ENCODE measurements at regions of chr15 and their contacts with region 1.

Region 1: GRCh38 chr15:37891766-37892368 is 42.6 kb upstream of the TMCO5A start:
- DNase-seq: peak; percentile 42 to 68 (median 65)
- H3K4me3 ChIP-seq: peak overlapping the region in 1 of 7 experiments; percentile 17
- H3K27ac ChIP-seq: no peak overlapping the region
- H3K4me1 ChIP-seq: peaks cover 0 to 4% (median 1%) of the 10 kb centered on the region in 4 experiments
- H3K27me3 ChIP-seq: peaks cover 0 to 11% (median 2%) of the 10 kb centered on the region in 5 experiments

Region 2: DNA sequence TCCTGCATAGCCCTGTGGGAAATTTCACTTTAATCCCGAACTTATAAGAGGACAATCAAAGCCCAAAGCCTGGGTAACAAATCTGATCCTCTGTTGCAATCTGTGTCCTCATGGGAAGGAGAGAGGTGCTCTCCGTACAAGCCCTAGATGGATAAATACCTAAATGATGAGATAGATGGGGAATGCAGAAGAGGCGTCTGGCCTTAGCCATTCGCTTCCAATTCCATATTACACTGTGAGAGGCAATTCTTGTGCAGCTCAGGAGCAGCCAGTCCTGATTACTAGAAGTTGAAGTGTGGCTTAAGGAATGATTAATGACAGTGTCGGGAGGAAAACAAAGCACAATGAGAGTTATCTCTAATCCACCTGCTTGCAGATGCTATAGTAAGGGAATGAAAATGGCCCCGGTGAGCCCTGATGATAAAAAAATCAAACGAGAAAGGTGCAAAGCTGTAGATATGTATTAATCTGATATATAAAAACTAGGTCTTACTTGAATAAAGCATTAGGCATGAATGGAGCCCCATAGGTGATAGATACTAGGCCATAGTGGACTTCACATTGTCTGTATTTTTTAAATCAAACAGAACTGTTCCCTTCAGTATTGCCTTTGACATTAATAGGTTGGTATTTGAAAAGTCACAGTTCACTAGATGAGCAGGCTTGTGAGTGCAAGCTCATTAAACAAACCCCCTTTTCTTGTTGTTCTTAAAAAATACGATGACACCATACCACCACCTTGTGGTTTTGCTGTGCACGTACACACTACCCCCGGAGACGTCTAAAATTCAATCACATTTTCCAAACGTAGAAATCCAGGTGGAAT is 11.6 kb before region 1 on chr15:
- CTCF ChIA-PET with region 1: interaction called, 28 read pairs
- POLR2A ChIA-PET with region 1: no interaction called
- DNase-seq: peak; percentile 63 to 80 (median 77)
- H3K4me3 ChIP-seq: no peak overlapping the region
- H3K27ac ChIP-seq: no peak overlapping the region
- H3K4me1 ChIP-seq: peaks cover 0 to 5% (median 0%) of the 10 kb centered on the region in 4 experiments
- H3K27me3 ChIP-seq: peaks cover 0 to 3% (median 0%) of the 10 kb centered on the region in 5 experiments

Region 3: GRCh38 chr15:37907136-37907535 is 15.3 kb after region 1 on chr15:
- CTCF ChIA-PET with region 1: no interaction called
- POLR2A ChIA-PET with region 1: no interaction called
- DNase-seq: peak in 1 of 3 donors; percentile 2
- H3K4me3 ChIP-seq: no peak overlapping the region
- H3K27ac ChIP-seq: no peak overlapping the region
- H3K4me1 ChIP-seq: no peaks in the 10 kb centered on the region
- H3K27me3 ChIP-seq: peaks cover 0 to 2% (median 0%) of the 10 kb centered on the region in 5 experiments

Region 4: DNA sequence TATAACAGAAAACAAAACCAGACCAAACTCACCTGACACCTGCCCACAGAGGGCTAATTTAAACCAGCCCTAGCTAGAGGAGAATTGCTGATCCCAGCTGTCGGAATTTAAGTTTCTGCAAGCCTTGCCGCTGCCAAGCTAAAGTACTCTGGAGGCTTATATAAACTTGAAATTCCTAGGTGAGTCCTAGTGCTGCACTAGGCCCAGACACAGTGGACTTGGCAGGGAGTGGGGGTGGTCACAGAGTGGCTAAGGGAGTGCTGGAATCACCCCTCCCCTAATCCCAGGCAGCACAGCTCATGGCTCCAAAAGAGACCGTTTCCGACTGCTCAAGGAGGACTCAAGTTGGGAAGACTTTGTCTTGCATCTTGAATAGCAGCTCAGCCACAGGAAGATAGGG is 60.1 kb after region 1 on chr15:
- CTCF ChIA-PET with region 1: no interaction called
- POLR2A ChIA-PET with region 1: no interaction called
- DNase-seq: no peak
- H3K4me3 ChIP-seq: no peak overlapping the region
- H3K27ac ChIP-seq: no peak overlapping the region
- H3K4me1 ChIP-seq: no peaks in the 10 kb centered on the region
- H3K27me3 ChIP-seq: no peaks in the 10 kb centered on the region

Region 5: GRCh38 chr15:38059665-38060064 is 167.8 kb after region 1 on chr15:
- CTCF ChIA-PET with region 1: no interaction called
- POLR2A ChIA-PET with region 1: no interaction called
- DNase-seq: no peak
- H3K4me3 ChIP-seq: no peak overlapping the region
- H3K27ac ChIP-seq: no peak overlapping the region
- H3K4me1 ChIP-seq: no peaks in the 10 kb centered on the region
- H3K27me3 ChIP-seq: no peaks in the 10 kb centered on the region